Transverse colon (tissue), 4 donors: ENCODE measurements at regions of chr22 and their contacts with region 1.

Region 1: GRCh38 chr22:47593911-47594311 is 831.5 kb downstream of the TBC1D22A start:
- DNase-seq: no peak
- H3K4me3 ChIP-seq: no peak overlapping the region
- H3K27ac ChIP-seq: no peak overlapping the region
- H3K4me1 ChIP-seq: no peaks in the 10 kb centered on the region
- H3K27me3 ChIP-seq: no peaks in the 10 kb centered on the region
- CTCF ChIP-seq: no peak
- EP300 ChIP-seq: no peak
- POLR2A ChIP-seq: no peak

Region 2: DNA sequence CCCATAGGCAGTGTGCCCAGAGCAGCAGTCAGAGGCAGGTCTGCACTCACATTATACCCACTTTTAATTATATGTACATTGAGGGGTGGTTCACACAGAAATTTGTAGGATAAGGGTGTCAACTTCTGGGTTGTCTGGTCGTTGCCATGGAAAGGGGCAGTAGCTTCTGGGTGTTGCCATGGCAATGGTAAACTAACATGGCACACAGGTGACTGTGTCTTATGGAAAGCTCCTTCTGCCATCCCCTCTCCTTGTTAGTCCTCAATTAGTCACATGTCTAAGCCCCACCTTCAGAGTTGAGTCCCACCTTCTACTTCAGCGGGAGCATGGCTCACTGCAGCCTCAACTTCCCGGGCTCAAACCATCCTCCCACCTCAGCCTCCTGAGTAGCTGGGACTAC is 1978.5 kb before region 1 on chr22:
- in situ Hi-C with region 1: loop called (anchors 5 kb)
- intact Hi-C with region 1: no loop called
- DNase-seq: no peak
- H3K4me3 ChIP-seq: no peak overlapping the region
- H3K27ac ChIP-seq: no peak overlapping the region
- H3K4me1 ChIP-seq: no peaks in the 10 kb centered on the region
- H3K27me3 ChIP-seq: no peaks in the 10 kb centered on the region
- CTCF ChIP-seq: no peak
- EP300 ChIP-seq: no peak
- POLR2A ChIP-seq: no peak